Activated naive CD4-positive, alpha-beta T cell treated with anti-CD3 and anti-CD28 coated beads, Interleukin-2, amount 10 ng/mL, durations not matched to agents 7 days and 5 days (primary cell): ENCODE measurements at regions of chr9 and their contacts with region 1.

Region 1: GRCh38 chr9:97598461-97599288 is 34.5 kb downstream of the TSTD2 start:
- DNase-seq: peak; percentile 83
- H3K4me3 Mint-ChIP-seq: no peak overlapping the region
- H3K27ac Mint-ChIP-seq: no peak overlapping the region
- H3K4me1 Mint-ChIP-seq: peaks cover 8% of the 10 kb centered on the region
- H3K27me3 Mint-ChIP-seq: no peaks in the 10 kb centered on the region

Region 2: GRCh38 chr9:97386733-97387503 is 211.8 kb before region 1 on chr9:
- CTCF ChIA-PET with region 1: interaction called, 32 read pairs
- DNase-seq: peak; percentile 79
- H3K4me3 Mint-ChIP-seq: no peak overlapping the region
- H3K27ac Mint-ChIP-seq: no peak overlapping the region
- H3K4me1 Mint-ChIP-seq: peaks cover 16% of the 10 kb centered on the region
- H3K27me3 Mint-ChIP-seq: peaks cover 44% of the 10 kb centered on the region

Region 3: GRCh38 chr9:97468658-97469448 is 129.8 kb before region 1 on chr9:
- CTCF ChIA-PET with region 1: interaction called, 92 read pairs
- DNase-seq: peak; percentile 64
- H3K4me3 Mint-ChIP-seq: no peak overlapping the region
- H3K27ac Mint-ChIP-seq: no peak overlapping the region
- H3K4me1 Mint-ChIP-seq: no peaks in the 10 kb centered on the region
- H3K27me3 Mint-ChIP-seq: no peaks in the 10 kb centered on the region

Region 4: GRCh38 chr9:97510797-97511761 is 87.6 kb before region 1 on chr9:
- CTCF ChIA-PET with region 1: interaction called, 12 read pairs
- DNase-seq: no peak
- H3K4me3 Mint-ChIP-seq: no peak overlapping the region
- H3K27ac Mint-ChIP-seq: no peak overlapping the region
- H3K4me1 Mint-ChIP-seq: no peaks in the 10 kb centered on the region
- H3K27me3 Mint-ChIP-seq: peaks cover 11% of the 10 kb centered on the region

Region 5: DNA sequence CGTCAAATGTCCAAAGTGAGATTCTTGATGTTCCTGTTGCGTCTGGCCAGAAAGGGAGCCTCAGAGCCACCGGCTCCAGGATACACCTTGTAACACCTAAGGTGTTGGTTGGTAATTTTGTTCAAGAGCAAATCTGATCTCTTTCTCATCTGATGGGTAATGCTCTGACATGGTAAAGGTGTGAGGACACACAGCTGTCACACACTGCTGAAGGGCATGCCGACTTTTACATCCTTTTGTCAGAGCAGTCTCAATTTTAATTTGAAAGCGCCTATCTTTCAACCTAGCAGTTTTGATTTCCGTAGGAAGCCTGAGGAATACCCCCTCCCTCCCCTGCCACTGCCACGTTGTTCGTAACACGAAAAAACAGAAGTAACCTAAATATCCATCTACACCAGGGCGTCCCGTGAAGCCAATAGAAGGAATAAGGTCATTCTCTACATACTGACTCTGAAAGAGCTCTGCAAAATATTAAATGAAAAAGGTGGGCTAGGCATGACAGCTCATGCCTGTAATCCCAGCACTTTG is 22.9 kb before region 1 on chr9:
- CTCF ChIA-PET with region 1: interaction called, 12 read pairs
- DNase-seq: no peak
- H3K4me3 Mint-ChIP-seq: peak overlapping the region; percentile 64
- H3K27ac Mint-ChIP-seq: peak overlapping the region; percentile 19
- H3K4me1 Mint-ChIP-seq: peaks cover 17% of the 10 kb centered on the region
- H3K27me3 Mint-ChIP-seq: peaks cover 7% of the 10 kb centered on the region

Region 6: GRCh38 chr9:97651646-97652045 is 53.0 kb after region 1 on chr9:
- CTCF ChIA-PET with region 1: no interaction called
- DNase-seq: no peak
- H3K4me3 Mint-ChIP-seq: no peak overlapping the region
- H3K27ac Mint-ChIP-seq: no peak overlapping the region
- H3K4me1 Mint-ChIP-seq: peaks cover 5% of the 10 kb centered on the region
- H3K27me3 Mint-ChIP-seq: no peaks in the 10 kb centered on the region

Region 7: DNA sequence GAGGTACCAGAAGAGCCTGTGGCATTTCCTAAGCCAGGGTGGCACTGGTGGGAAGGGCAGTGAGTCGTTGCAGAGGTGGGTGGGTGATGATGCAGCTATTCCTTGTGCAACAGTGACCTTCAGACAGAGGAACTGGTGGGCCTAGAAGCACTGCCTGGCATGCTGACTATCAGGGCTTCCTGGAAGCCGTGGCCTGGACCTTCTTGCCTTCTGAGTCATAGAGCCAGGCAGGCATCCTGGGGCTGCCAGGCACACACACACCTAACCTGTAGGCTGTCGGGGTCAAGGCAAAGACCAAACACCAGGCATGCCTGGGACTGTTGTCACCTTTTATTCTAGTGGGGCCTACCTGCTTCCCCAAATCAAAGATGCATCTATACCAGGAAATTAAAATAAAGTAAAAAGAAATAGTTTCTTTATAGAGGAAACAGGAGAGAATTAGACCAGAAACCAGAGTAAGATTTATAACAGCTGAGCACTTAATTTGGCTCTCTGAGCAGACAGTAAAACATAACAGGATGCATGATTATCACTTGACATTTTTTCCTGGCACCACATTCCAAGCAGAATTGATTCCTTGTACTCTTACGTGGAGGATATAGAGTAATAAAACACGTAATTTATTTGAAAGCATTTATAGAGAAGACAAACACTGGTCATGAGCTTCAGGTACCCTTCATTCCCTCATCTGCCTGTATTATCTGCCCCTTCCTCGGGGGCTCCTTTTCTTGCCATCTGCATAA is 483.0 kb after region 1 on chr9:
- CTCF ChIA-PET with region 1: no interaction called
- DNase-seq: no peak
- H3K4me3 Mint-ChIP-seq: no peak overlapping the region
- H3K27ac Mint-ChIP-seq: peak overlapping the region; percentile 79
- H3K4me1 Mint-ChIP-seq: peaks cover 45% of the 10 kb centered on the region
- H3K27me3 Mint-ChIP-seq: no peaks in the 10 kb centered on the region